AG04449 (cell line): ENCODE measurements at regions of chr20 and their contacts with region 1.

Region 1: DNA sequence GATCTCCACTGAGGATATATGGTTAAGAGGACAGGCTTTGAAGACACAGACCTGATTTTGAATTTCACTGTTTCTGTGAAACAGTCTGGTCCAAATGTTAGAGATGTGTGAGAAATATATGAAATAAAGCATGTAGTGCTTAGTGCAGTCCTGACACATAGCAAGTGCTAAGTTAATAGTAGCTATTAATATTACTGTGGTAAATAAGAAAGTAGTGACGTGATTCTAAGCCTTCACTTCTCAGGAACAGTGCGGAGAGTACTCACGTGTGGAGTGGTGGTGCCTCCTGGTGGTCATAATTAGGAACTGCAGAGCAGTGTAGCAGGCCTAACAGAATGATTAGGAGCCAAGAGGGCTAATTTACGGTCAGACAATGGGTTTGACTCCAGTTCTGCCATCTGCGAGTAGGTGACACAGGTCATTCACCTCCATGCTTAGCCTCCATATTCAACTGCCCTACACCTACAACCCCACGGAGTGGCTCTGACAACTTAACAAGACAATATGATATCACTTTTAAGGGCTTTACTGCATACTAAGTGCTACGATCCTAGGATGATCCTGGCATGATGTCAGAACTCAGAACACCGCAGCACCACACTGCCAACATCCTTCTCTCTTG is 106.2 kb downstream of the JPH2 start:
- DNase-seq: no peak
- H3K4me3 ChIP-seq: no peak overlapping the region
- CTCF ChIP-seq: peak; percentile 83

Region 2: GRCh38 chr20:43448748-43449535 is 631.8 kb before region 1 on chr20:
- CTCF ChIA-PET with region 1: interaction called, 10 read pairs
- POLR2A ChIA-PET with region 1: no interaction called
- DNase-seq: no peak
- H3K4me3 ChIP-seq: no peak overlapping the region
- CTCF ChIP-seq: peak; percentile 72

Region 3: GRCh38 chr20:43755390-43755789 is 325.4 kb before region 1 on chr20:
- CTCF ChIA-PET with region 1: interaction called, 453 read pairs
- POLR2A ChIA-PET with region 1: no interaction called
- DNase-seq: no peak
- H3K4me3 ChIP-seq: no peak overlapping the region
- CTCF ChIP-seq: no peak

Region 4: GRCh38 chr20:44041001-44041400 is 39.8 kb before region 1 on chr20:
- CTCF ChIA-PET with region 1: interaction called, 12 read pairs
- POLR2A ChIA-PET with region 1: no interaction called
- DNase-seq: no peak
- H3K4me3 ChIP-seq: no peak overlapping the region
- CTCF ChIP-seq: no peak

Region 5: GRCh38 chr20:44070139-44070900 is 10.4 kb before region 1 on chr20:
- CTCF ChIA-PET with region 1: interaction called, 13 read pairs
- POLR2A ChIA-PET with region 1: no interaction called
- DNase-seq: no peak
- H3K4me3 ChIP-seq: no peak overlapping the region
- CTCF ChIP-seq: no peak